ENCODE measurements at regions of chr20 and their contacts with region 1.

Region 1: DNA sequence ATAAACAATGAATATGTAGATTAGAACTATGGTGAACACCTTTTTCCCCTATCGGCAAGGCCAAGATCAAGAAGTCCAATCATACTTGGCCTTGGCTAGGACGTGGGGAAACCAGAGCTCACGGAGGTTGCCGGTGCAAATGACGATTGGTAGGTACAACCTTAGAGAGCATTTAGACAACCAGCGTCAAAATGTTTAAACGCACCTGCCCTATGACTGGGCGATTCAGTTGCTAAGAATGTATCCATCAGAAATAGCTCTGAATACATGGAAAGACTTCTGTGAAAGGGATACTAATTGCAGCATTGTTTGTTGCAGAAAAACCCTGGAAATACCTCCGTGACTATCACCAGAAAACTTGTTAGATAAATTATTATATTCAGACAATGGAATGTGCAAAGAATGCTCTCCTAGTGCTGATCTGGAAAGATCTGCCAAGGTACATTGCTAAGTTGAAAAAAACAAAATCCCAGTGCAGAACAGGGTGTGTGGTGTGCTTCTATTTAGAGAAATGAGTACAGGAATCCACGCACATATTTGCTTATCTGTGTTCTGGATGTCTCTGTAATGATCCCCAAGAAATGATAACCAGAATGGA is 48.0 kb upstream of the PTPN1 start:
- DNase-seq: no peak
- ATAC-seq: no peak
- H3K4me3 ChIP-seq: no peak overlapping the region
- H3K27ac ChIP-seq: no peak overlapping the region
- H3K4me1 ChIP-seq: peaks cover 29% of the 10 kb centered on the region
- H3K27me3 ChIP-seq: no peaks in the 10 kb centered on the region
- CTCF ChIP-seq: no peak

Region 2: GRCh38 chr20:50189681-50190582 is 272.3 kb before region 1 on chr20:
- intact Hi-C with region 1: loop called (anchors 2 kb)
- DNase-seq: peak; percentile 96
- ATAC-seq: peak; percentile 75
- H3K4me3 ChIP-seq: peak overlapping the region; percentile 87
- H3K27ac ChIP-seq: peak overlapping the region; percentile 99
- H3K4me1 ChIP-seq: peaks cover 34% of the 10 kb centered on the region
- H3K27me3 ChIP-seq: no peaks in the 10 kb centered on the region
- CTCF ChIP-seq: peak; percentile 75